Heart right ventricle (tissue), 16 donors: ENCODE measurements at regions of chr6 and their contacts with region 1.

Region 1: GRCh38 chr6:29964887-29965562 is 22.7 kb downstream of the HLA-A start:
- DNase-seq: peak; percentile 71 to 80
- ATAC-seq: peak; percentile 81 to 95 (median 88)
- H3K4me3 ChIP-seq: peak overlapping the region; percentile 25 to 64 (median 50)
- H3K27ac ChIP-seq: peak overlapping the region; percentile 74 to 98 (median 92)
- H3K4me1 ChIP-seq: peaks cover 8 to 63% (median 54%) of the 10 kb centered on the region in 9 donors
- H3K27me3 ChIP-seq: no peaks in the 10 kb centered on the region
- CTCF ChIP-seq: no peak

Region 2: DNA sequence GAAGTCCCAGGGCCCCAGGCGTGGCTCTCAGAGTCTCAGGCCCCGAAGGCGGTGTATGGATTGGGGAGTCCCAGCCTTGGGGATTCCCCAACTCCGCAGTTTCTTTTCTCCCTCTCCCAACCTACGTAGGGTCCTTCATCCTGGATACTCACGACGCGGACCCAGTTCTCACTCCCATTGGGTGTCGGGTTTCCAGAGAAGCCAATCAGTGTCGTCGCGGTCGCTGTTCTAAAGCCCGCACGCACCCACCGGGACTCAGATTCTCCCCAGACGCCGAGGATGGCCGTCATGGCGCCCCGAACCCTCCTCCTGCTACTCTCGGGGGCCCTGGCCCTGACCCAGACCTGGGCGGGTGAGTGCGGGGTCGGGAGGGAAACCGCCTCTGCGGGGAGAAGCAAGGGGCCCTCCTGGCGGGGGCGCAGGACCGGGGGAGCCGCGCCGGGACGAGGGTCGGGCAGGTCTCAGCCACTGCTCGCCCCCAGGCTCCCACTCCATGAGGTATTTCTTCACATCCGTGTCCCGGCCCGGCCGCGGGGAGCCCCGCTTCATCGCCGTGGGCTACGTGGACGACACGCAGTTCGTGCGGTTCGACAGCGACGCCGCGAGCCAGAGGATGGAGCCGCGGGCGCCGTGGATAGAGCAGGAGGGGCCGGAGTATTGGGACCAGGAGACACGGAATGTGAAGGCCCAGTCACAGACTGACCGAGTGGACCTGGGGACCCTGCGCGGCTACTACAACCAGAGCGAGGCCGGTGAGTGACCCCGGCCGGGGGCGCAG is 22.6 kb before region 1 on chr6 and contains the start of gene HLA-A:
- intact Hi-C with region 1: loop called in 1 of 10 experiments (anchors 2 kb)
- DNase-seq: peak; percentile 91 to 96
- ATAC-seq: peak; percentile 97 to 98 (median 98)
- H3K4me3 ChIP-seq: peak within 1 kb of the TSS; percentile 53 to 96 (median 78)
- H3K27ac ChIP-seq: peak within 1 kb of the TSS; percentile 73 to 98 (median 91)
- H3K4me1 ChIP-seq: peaks cover 0 to 42% (median 29%) of the 10 kb centered on the region in 9 donors
- H3K27me3 ChIP-seq: no peaks in the 10 kb centered on the region
- CTCF ChIP-seq: no peak
- total RNA-seq, gene HLA-A: 218 to 1,594 (median 276) TPM

Region 3: DNA sequence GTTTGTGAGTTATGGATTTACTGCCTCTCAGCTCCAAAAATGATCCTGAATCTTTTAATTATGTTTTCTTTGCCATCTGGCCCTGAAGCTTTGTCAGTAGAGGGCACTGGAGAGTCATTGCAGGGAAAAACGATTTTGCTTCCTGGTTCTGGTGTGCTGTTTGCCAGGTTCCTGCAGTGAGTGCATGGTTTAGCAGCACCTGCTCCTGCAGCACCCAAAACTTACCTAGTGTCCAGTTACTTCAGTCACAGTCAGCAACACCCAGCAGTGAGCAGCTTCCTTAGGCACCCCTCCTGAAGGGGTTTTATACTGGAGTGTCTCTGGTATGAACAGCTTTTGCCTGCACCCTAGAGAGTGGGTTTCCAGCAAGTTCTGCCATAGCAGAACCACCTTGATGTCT is 254.2 kb after region 1 on chr6:
- intact Hi-C with region 1: no loop called
- DNase-seq: peak in 1 of 2 donors; percentile 30
- ATAC-seq: peak in 4 of 8 donors; percentile 30 to 59 (median 47)
- H3K4me3 ChIP-seq: no peak overlapping the region
- H3K27ac ChIP-seq: no peak overlapping the region
- H3K4me1 ChIP-seq: peaks cover 0 to 15% (median 0%) of the 10 kb centered on the region in 9 donors
- H3K27me3 ChIP-seq: no peaks in the 10 kb centered on the region
- CTCF ChIP-seq: peak; percentile 52 to 91 (median 82)